ENCODE measurements at regions of chr3 and their contacts with region 1.

Region 1: DNA sequence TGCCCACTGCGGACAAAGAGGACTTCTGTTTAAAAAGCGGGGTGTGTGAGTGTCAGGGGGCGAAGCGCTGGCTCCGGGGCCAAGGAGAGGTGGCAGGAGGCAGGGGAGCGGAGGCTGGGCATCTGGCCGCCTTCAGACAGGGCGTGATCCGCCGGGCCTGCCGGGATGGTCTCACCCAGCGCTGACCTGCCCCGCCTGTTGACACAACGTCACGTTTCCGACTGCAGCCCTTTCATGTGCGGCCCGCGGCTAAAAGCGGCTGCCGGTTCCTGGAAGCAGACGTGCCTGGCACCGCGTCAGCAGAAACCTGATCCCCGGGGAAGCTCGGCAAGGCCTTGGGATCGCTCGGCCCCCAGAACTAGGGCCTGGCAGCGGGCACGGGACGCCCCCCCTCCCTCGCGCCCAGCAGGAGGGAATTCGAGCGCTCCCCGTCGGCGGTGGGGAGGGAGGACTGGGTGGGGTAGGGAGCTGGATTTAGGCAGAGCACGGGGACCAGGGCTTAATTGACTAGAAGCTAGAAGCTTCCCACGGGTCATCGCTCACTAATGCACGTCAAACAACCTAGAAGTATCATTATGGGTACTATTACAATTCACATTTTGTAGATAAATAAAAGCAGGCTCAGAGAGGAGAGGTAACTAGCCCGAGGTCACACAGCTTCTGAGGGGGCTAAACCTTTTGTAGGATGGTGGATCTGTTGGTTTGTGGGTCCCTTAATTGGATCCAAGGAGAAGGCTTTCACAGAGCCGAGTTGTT is 7.7 kb downstream of the BHLHE40 start:
- DNase-seq: peak; percentile 86
- H3K4me3 Mint-ChIP-seq: peak overlapping the region; percentile 76
- H3K27ac Mint-ChIP-seq: peak overlapping the region; percentile 87
- H3K4me1 Mint-ChIP-seq: peaks cover 69% of the 10 kb centered on the region
- H3K27me3 Mint-ChIP-seq: no peaks in the 10 kb centered on the region

Region 2: DNA sequence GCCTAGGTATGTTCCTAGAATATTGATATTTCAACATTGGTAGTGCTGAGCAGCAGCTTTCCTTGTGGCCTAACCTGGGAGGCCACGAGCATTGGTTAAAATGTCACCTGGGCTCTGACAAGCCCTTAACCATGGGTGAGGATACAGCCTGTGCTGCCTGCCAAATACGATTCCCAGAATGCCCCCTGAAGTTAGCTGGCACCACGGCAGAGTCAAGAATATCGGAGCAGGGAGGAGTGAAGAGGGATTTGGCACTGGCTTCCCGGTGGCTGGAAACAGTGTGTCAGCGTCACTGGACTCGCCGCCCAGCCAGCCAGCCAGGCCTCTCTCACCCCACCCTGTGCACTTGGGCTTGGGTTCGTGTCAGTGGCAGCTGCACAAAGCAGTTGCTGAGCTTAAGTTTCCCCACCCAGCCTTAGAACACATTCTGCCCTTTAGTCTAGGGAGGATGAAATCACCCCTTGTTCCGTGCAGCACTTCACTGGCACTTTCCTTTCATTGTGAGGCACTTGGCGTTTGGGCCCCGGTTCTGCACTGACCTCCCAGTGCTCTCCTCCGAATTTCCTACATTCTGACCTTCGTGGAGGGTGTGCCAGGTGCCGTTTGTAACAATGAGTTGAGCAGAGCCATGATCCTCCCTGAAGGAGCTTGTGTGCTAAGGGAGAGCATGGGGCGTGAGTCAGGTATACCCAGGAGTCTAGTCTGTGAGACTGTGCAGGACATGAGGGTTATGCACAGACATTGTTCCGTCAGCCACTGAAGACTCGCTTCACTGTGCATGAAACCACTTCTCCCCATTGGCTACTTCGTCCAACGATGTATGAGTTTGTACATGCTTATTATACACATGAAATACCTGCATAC is 160.5 kb before region 1 on chr3:
- CTCF ChIA-PET with region 1: interaction called, 13 read pairs
- POLR2A ChIA-PET with region 1: interaction called, 822 read pairs
- DNase-seq: no peak
- H3K4me3 Mint-ChIP-seq: peak overlapping the region; percentile 83
- H3K27ac Mint-ChIP-seq: peak overlapping the region; percentile 93
- H3K4me1 Mint-ChIP-seq: peaks cover 94% of the 10 kb centered on the region
- H3K27me3 Mint-ChIP-seq: no peaks in the 10 kb centered on the region

Region 3: GRCh38 chr3:4906107-4906621 is 80.8 kb before region 1 on chr3:
- CTCF ChIA-PET with region 1: interaction called, 3 read pairs
- POLR2A ChIA-PET with region 1: interaction called, 33 read pairs
- DNase-seq: peak; percentile 46
- H3K4me3 Mint-ChIP-seq: peak overlapping the region; percentile 64
- H3K27ac Mint-ChIP-seq: peak overlapping the region; percentile 80
- H3K4me1 Mint-ChIP-seq: peaks cover 88% of the 10 kb centered on the region
- H3K27me3 Mint-ChIP-seq: no peaks in the 10 kb centered on the region

Region 4: GRCh38 chr3:5026331-5027218 is 39.6 kb after region 1 on chr3:
- CTCF ChIA-PET with region 1: interaction called, 59 read pairs
- POLR2A ChIA-PET with region 1: interaction called, 588 read pairs
- DNase-seq: peak; percentile 69
- H3K4me3 Mint-ChIP-seq: peak overlapping the region; percentile 82
- H3K27ac Mint-ChIP-seq: peak overlapping the region; percentile 81
- H3K4me1 Mint-ChIP-seq: peaks cover 58% of the 10 kb centered on the region
- H3K27me3 Mint-ChIP-seq: no peaks in the 10 kb centered on the region